Panc1 (cell line): ENCODE measurements at regions of chr17 and their contacts with region 1.

Region 1: DNA sequence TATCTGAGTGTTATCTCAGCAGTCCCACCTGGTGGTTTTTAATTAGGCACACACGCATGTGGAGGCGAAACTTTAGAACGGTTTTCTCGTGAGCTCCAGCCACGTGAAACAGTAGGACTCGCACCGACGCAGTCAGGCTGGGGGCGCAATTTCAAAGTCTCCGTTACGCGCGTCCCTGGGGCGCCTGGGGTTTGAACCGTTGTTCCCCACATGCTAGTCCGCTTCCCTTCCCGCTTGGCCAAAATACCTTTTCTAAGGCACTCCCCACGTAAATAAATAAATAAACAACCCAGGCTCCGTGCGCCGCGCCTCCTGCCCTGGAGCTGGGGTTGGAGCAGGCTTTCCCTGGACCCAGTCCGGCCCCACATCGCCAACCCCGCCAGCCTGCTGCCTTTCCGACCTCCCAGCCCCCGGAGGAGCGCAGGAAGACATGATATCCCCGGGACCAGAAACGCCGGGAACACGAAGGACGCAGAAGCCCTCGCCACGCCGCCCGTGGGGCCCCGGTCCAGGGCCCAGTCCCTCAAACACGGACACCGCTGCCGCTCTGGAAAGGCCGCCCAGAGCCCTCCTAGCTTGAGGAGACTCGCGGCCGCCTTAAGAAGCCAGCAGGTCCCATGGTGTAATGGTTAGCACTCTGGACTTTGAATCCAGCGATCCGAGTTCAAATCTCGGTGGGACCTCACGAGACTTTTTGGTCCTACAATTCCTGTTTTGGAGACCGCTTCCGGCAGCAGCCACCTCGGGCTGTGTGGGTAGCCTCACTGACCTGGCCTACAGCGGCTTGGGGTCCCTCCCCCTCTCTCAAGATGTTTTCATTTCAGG is 18.2 kb downstream of the GNGT2 start:
- DNase-seq: peak; percentile 90
- ATAC-seq: peak; percentile 87
- H3K4me3 ChIP-seq: peak overlapping the region; percentile 69 to 82
- H3K27ac ChIP-seq: peak overlapping the region; percentile 97
- H3K4me1 ChIP-seq: peaks cover 14% of the 10 kb centered on the region
- H3K27me3 ChIP-seq: no peaks in the 10 kb centered on the region
- CTCF ChIP-seq: no peak; the same call in 1 of the 2 replicates

Region 2: DNA sequence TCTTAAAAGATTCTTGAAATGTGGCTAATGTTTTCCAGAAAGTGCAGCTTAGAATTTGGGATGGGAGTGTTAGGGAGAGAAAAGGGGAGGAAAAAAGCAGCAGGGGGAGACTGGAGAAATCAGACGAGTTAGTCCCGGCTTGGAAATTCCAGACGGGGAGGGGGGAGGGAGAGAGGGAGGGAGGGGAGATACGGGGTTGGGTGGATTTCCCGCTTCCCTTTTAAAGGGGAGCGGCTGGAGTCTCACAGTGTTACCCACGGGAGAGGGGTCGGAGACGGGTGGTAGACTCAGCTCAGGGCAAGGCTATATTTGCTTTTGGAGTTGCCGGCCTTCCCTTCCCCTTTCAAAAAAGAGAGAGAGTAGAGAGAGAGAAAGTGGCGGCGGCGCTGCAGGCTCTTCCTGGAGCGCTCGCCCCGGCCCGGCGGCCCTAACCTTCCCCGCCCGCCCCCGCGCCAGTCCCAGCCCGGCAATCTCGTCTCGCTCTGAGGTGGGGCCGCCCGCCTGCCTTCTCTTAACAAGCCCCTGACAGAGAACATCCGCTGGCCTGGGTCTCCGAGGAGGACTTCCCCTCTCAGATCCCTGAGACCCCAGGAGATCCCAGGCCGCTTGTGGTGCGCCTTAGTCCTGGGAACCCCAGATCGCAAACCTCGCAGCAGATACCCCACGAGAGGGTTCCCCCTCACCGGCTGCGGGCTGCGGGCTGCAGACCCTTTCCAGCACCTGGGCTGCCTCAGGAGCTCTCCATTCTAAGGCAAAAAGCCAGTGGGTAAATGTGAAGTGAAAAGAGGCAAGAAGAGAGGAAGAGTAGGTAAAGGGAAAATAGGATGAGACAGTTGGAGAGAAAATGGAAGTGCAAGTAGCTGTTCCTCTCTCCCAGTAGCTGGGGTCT is 188.3 kb before region 1 on chr17:
- CTCF ChIA-PET with region 1: interaction called, 10 read pairs
- POLR2A ChIA-PET with region 1: no interaction called
- in situ Hi-C with region 1: no loop called
- intact Hi-C with region 1: no loop called
- DNase-seq: no peak
- ATAC-seq: peak; percentile 80
- H3K4me3 ChIP-seq: peak overlapping the region; percentile 34 to 57
- H3K27ac ChIP-seq: peak overlapping the region; percentile 97
- H3K4me1 ChIP-seq: peaks cover 57% of the 10 kb centered on the region
- H3K27me3 ChIP-seq: no peaks in the 10 kb centered on the region; the same call in 1 of the 2 replicates
- CTCF ChIP-seq: no peak

Region 3: GRCh38 chr17:49063652-49064051 is 128.5 kb before region 1 on chr17:
- CTCF ChIA-PET with region 1: no interaction called
- POLR2A ChIA-PET with region 1: no interaction called
- in situ Hi-C with region 1: no loop called
- intact Hi-C with region 1: no loop called
- DNase-seq: no peak
- ATAC-seq: no peak
- H3K4me3 ChIP-seq: no peak overlapping the region
- H3K27ac ChIP-seq: no peak overlapping the region
- H3K4me1 ChIP-seq: no peaks in the 10 kb centered on the region
- H3K27me3 ChIP-seq: no peaks in the 10 kb centered on the region
- CTCF ChIP-seq: no peak

Region 4: GRCh38 chr17:49076573-49077384 is 115.3 kb before region 1 on chr17:
- CTCF ChIA-PET with region 1: no interaction called
- POLR2A ChIA-PET with region 1: interaction called, 13 read pairs
- in situ Hi-C with region 1: no loop called
- intact Hi-C with region 1: no loop called
- DNase-seq: peak; percentile 45
- ATAC-seq: peak; percentile 80
- H3K4me3 ChIP-seq: no peak overlapping the region
- H3K27ac ChIP-seq: no peak overlapping the region
- H3K4me1 ChIP-seq: no peaks in the 10 kb centered on the region
- H3K27me3 ChIP-seq: no peaks in the 10 kb centered on the region
- CTCF ChIP-seq: no peak

Region 5: DNA sequence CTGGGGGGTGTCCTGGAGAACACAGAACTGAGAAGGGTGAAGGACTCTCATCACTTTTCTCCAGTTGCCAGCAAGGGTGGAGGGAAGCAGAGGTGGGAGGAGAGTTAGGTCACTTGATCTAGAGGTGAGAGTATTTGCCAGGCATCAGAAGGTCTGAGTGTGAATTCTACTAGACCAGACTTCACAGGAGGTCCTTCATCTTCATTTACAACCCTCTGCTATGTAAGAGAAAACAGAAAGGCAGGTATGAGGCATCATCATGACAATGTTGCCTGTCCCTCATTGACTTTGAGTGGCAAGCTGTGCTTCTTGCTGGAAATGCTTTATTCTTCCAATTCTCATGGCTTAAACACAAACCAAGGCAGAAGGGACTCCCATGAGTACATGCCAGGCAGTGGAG is 105.5 kb before region 1 on chr17:
- CTCF ChIA-PET with region 1: no interaction called
- POLR2A ChIA-PET with region 1: interaction called, 17 read pairs
- in situ Hi-C with region 1: no loop called
- intact Hi-C with region 1: no loop called
- DNase-seq: no peak
- ATAC-seq: no peak
- H3K4me3 ChIP-seq: no peak overlapping the region
- H3K27ac ChIP-seq: no peak overlapping the region
- H3K4me1 ChIP-seq: no peaks in the 10 kb centered on the region
- H3K27me3 ChIP-seq: no peaks in the 10 kb centered on the region
- CTCF ChIP-seq: no peak

Region 6: DNA sequence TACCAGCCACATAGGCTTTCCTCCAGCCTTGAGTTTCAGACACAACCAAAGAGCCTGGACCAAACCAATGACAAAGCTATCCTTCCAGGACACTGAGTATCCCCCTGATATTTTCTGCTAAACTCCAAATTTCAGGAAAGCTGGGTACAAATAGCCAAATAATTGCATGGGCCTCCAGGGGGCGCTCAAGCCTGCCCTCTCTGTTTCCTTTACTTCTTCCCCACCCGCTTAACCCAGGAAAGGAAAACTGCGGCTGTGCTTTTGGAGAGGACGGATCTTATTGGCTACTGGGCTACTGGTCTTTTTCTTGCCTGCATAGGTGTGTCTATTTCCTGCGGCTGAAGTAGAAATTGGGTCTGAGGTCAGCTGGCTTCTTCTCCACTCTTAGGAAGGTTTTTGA is 11.8 kb before region 1 on chr17:
- CTCF ChIA-PET with region 1: interaction called, 3 read pairs
- POLR2A ChIA-PET with region 1: interaction called, 13 read pairs
- in situ Hi-C with region 1: no loop called
- intact Hi-C with region 1: no loop called
- DNase-seq: peak; percentile 28
- ATAC-seq: peak; percentile 83
- H3K4me3 ChIP-seq: no peak overlapping the region
- H3K27ac ChIP-seq: no peak overlapping the region
- H3K4me1 ChIP-seq: no peaks in the 10 kb centered on the region; the same call in 1 of the 2 replicates
- H3K27me3 ChIP-seq: no peaks in the 10 kb centered on the region
- CTCF ChIP-seq: peak; percentile 99

Region 7: GRCh38 chr17:49230636-49231562 is 38.8 kb after region 1 on chr17 and contains the start of gene PHOSPHO1:
- CTCF ChIA-PET with region 1: interaction called, 8 read pairs
- POLR2A ChIA-PET with region 1: interaction called, 13 read pairs
- in situ Hi-C with region 1: no loop called
- intact Hi-C with region 1: no loop called
- DNase-seq: no peak
- ATAC-seq: peak; percentile 95
- H3K4me3 ChIP-seq: peak within 1 kb of the TSS; percentile 61 to 86
- H3K27ac ChIP-seq: no peak within 1 kb of the TSS; the same call in 1 of the 2 replicates
- H3K4me1 ChIP-seq: peaks cover 10% of the 10 kb centered on the region
- H3K27me3 ChIP-seq: peaks cover 5% of the 10 kb centered on the region; the same call in 1 of the 2 replicates
- CTCF ChIP-seq: no peak
- total RNA-seq, gene PHOSPHO1: 0.54 TPM

Region 8: DNA sequence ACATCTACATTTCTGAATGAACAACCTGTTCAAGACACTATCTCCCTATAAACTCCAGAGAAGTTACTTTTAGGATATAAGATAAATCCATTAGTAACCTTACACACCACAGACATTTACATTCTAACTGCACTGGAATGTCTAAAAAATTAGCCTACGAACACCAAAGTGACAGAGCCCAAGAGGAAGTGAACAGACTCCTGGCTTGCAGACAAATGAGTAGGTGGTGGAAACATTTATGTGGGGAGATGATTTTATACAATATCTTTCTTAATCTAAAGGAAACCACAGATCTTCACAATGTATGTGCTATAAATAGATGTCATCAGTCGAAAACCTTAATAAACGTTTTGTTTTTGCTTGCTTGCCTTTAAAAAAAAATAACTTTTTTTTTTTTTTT is 151.1 kb after region 1 on chr17:
- CTCF ChIA-PET with region 1: interaction called, 15 read pairs
- POLR2A ChIA-PET with region 1: no interaction called
- in situ Hi-C with region 1: no loop called
- intact Hi-C with region 1: no loop called
- DNase-seq: no peak
- ATAC-seq: no peak
- H3K4me3 ChIP-seq: no peak overlapping the region
- H3K27ac ChIP-seq: no peak overlapping the region
- H3K4me1 ChIP-seq: peaks cover 5% of the 10 kb centered on the region; the same call in 1 of the 2 replicates
- H3K27me3 ChIP-seq: no peaks in the 10 kb centered on the region
- CTCF ChIP-seq: no peak